ENCODE measurements at regions of chr11 and their contacts with region 1.

Region 1: GRCh38 chr11:59680287-59681154 is 11.7 kb upstream of the PATL1 start:
- DNase-seq: peak; percentile 77
- ATAC-seq: peak; percentile 100
- H3K4me3 Mint-ChIP-seq: no peak overlapping the region
- H3K27ac Mint-ChIP-seq: no peak overlapping the region
- H3K4me1 Mint-ChIP-seq: no peaks in the 10 kb centered on the region
- H3K27me3 Mint-ChIP-seq: peaks cover 3% of the 10 kb centered on the region; the same call in 1 of the 2 replicates
- CTCF ChIP-seq: 0 out of 2 replicates have a peak, but pooled peaks have one; percentile 22

Region 2: GRCh38 chr11:59510940-59511589 is 169.5 kb before region 1 on chr11 and contains the start of gene OR4D9:
- CTCF ChIA-PET with region 1: no interaction called
- POLR2A ChIA-PET with region 1: no interaction called
- DNase-seq: no peak
- ATAC-seq: no peak
- H3K4me3 Mint-ChIP-seq: no peak within 1 kb of the TSS
- H3K27ac Mint-ChIP-seq: no peak within 1 kb of the TSS
- H3K4me1 Mint-ChIP-seq: no peaks in the 10 kb centered on the region
- H3K27me3 Mint-ChIP-seq: no peaks in the 10 kb centered on the region
- CTCF ChIP-seq: no peak
- total RNA-seq, gene OR4D9: not detected in 3 replicates

Region 3: DNA sequence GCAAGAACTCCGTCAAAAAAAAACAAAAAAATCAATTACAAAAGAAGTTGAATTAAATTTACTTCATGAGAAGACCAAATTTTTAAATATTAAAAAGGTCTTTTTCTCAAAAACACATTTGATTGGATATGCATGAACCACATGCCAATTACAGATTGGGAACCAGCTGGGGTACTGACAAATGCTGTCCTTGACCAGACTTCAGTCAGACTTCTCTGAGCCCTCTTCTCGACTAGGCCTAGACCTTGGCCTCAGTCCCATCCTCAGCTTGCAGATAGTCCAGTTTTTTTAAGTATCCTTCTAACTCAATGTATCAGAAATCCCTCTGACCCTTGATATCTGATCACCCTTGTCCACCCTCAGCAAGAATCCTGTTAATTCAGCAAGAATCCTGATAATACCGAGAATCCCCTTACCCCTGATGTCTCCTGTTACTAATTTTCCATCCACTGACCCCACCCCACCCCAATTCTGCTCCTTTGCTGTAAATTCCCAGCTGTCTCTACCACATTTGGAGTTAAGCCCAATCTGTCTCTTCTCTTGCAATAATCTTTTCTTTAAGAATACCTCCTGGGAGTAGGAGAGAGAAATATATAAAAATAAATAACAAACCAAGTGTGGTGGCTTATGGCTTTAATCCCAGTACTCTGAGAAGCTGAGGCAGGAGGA is 138.2 kb before region 1 on chr11:
- CTCF ChIA-PET with region 1: interaction called, 16 read pairs
- POLR2A ChIA-PET with region 1: no interaction called
- DNase-seq: no peak
- ATAC-seq: no peak
- H3K4me3 Mint-ChIP-seq: no peak overlapping the region
- H3K27ac Mint-ChIP-seq: no peak overlapping the region
- H3K4me1 Mint-ChIP-seq: peaks cover 9% of the 10 kb centered on the region
- H3K27me3 Mint-ChIP-seq: no peaks in the 10 kb centered on the region; the same call in 1 of the 2 replicates
- CTCF ChIP-seq: no peak

Region 4: DNA sequence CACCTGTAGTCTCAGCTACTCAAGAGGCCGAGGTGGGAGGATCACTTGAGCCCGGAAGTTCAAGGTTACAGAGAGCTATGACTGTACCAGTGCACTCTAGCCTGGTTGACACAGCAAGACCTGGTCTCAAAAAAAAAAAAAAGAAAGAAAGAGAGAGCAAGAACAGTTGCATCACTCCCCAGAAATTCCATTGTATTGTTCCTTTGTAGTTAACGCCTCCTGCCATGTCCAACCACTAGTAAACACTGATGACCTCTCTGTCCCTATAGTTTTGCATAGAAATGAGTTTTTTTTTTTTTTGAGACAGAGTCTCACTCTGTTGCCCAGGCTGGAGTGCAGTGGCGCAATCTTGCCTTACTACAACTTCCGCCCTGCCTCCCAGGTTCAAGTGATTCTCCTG is 22.5 kb before region 1 on chr11:
- CTCF ChIA-PET with region 1: no interaction called
- POLR2A ChIA-PET with region 1: no interaction called
- DNase-seq: no peak
- ATAC-seq: no peak
- H3K4me3 Mint-ChIP-seq: no peak overlapping the region
- H3K27ac Mint-ChIP-seq: no peak overlapping the region
- H3K4me1 Mint-ChIP-seq: peaks cover 7% of the 10 kb centered on the region
- H3K27me3 Mint-ChIP-seq: no peaks in the 10 kb centered on the region
- CTCF ChIP-seq: no peak

Region 5: GRCh38 chr11:59668950-59669610 is 11.4 kb before region 1 on chr11 and contains the start of gene PATL1:
- CTCF ChIA-PET with region 1: interaction called, 16 read pairs
- POLR2A ChIA-PET with region 1: interaction called, 6 read pairs
- DNase-seq: peak; percentile 96
- ATAC-seq: peak; percentile 89
- H3K4me3 Mint-ChIP-seq: peak within 1 kb of the TSS; percentile 92
- H3K27ac Mint-ChIP-seq: peak within 1 kb of the TSS; percentile 99
- H3K4me1 Mint-ChIP-seq: peaks cover 18% of the 10 kb centered on the region
- H3K27me3 Mint-ChIP-seq: no peaks in the 10 kb centered on the region; the same call in 1 of the 2 replicates
- CTCF ChIP-seq: no peak
- total RNA-seq, gene PATL1: 27.6 to 30.5 TPM (median 29.9 TPM) in 3 replicates

Region 6: GRCh38 chr11:59691156-59691555 is 10.6 kb after region 1 on chr11:
- CTCF ChIA-PET with region 1: interaction called, 11 read pairs
- POLR2A ChIA-PET with region 1: no interaction called
- DNase-seq: no peak
- ATAC-seq: no peak
- H3K4me3 Mint-ChIP-seq: no peak overlapping the region
- H3K27ac Mint-ChIP-seq: no peak overlapping the region
- H3K4me1 Mint-ChIP-seq: no peaks in the 10 kb centered on the region
- H3K27me3 Mint-ChIP-seq: peaks cover 13% of the 10 kb centered on the region
- CTCF ChIP-seq: no peak